GM18951 (cell line): ENCODE measurements at regions of chr4 and their contacts with region 1.

Region 1: GRCh38 chr4:168514249-168514852 is 17.5 kb downstream of the PALLD start:
- POLR2A ChIP-seq: no peak

Region 2: GRCh38 chr4:168923526-168924194 is 409.3 kb after region 1 on chr4:
- in situ Hi-C with region 1: loop called (anchors 25 kb)
- POLR2A ChIP-seq: no peak